Activated T-helper 1 cell treated with anti-CD3 and anti-CD28 coated beads, Interleukin-12 subunit alpha, Interleukin-12 subunit beta, Interleukin-2, Interleukin-4 antibody, amounts not matched to agents 30 ng/mL and 10 ng/mL and 1 ng/mL, durations not matched to agents 14 hours and 24 hours and 36 hours (primary cell): ENCODE measurements at regions of chr1 and their contacts with region 1.

Region 1: DNA sequence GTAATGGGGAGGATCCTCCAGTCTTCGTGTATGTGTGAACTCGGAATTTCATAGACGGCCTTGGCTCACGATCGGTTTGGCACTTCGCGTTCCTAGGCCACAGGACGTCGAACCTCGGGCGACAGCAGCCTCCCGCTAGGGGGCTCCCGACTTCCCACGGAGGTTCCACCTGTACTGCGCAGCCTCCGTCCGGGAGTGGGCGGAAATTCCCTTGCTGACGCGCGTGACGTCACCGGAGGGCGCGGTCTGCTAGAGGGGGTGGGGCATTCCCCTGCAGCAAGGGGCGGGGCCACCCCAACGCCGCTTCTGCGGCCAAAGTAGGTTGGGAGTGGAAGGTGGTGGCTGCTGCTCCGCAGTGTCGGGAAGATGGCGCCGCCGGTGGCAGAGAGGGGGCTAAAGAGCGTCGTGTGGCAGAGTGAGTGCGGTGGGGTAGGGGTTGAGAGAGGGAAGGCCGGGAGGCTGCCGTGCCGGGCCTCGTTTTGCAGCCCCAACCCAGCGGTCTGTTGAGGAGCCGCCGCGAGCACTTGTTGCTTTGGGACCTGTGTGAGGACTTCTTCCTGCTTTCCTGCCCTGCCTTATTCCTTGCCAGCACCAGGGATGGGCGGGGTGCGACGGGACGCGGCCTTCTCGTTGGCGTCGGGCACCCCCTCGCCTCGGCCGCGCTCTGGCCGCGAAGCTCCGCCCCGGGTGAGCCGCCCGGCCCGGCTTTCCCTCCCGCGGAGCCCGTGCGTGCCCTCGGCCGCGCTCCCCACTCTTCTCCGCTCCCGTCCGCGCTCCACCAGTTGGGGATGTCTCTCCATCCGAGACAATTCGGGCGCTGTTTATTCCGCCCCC is at the start of gene STXBP3:
- DNase-seq: peak; percentile 98
- H3K4me3 Mint-ChIP-seq: peak within 1 kb of the TSS; percentile 97
- H3K27ac Mint-ChIP-seq: peak within 1 kb of the TSS; percentile 100
- H3K4me1 Mint-ChIP-seq: peaks cover 35% of the 10 kb centered on the region
- H3K27me3 Mint-ChIP-seq: peaks cover 3% of the 10 kb centered on the region
- total RNA-seq, gene STXBP3: 39.6 and 42.4 TPM in 2 replicates

Region 2: DNA sequence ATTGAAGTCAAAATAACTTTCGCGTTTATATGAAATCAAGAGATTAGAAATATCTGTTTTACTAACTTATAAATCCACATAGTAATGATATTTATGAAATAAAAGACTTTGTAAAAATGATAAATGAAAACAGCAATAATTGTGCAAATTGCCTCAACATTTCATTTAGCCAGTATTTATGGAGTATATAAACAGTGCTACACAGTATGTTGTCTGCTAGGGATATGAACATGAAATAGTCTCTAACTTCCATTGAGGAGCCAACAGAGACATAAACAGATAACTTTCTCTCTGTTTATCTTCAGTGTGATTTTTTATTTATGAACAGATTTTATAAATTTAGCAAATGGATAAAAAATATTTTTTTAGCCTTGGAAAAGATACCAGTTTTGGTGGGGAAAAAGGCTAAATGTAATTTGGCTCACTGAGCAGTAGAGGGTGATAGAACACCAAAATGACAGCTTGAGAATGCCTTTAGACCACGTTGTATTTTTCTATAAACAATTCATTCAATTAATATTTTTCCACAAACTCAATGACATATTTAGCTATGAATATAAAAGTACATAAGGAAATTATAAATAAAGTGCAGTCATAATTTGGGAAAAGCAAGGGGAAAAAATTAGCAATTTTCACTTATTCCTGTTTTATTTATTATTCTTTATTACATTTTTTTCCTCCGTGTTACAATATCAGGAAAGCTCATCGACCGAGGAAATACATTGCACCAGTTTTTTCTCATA is 234.2 kb before region 1 on chr1:
- intact Hi-C with region 1: loop called (anchors 5 kb)
- DNase-seq: no peak
- H3K4me3 Mint-ChIP-seq: no peak overlapping the region
- H3K27ac Mint-ChIP-seq: no peak overlapping the region
- H3K4me1 Mint-ChIP-seq: no peaks in the 10 kb centered on the region
- H3K27me3 Mint-ChIP-seq: peaks cover 46% of the 10 kb centered on the region

Region 3: DNA sequence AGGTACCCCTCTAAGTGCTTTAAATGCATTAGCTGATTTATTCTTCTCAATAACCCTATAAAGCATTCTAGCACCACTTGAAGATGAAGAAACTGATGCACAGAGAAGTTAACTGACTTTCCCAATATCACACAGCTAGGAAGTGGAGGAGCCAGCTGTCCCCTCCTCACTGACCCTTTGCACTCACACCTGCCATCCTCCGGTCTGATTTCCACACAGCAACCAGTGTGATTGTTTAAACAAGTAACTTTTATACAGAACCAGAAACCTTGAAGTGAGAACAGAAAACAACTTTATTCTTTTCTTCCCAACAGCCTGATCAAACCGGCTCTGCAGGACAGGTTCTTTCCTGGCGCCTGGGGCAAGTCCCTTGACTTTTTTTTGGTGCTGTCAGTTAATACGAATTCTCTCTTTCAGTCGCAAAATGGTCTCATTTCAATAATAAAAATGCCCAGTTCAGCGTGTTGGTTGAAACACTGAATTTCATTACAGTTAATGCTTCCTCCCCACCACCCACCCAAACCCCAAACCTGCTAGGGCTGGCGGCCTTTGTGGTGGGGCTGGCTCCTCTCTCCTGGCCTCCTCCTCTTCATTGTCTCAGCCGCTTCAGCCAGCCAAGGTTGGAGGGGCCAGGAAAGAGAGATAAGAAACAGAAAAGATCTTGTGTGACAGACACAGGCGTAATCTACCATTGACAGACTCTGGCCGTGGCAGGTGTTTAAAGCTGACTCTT is 213.1 kb before region 1 on chr1:
- intact Hi-C with region 1: no loop called
- DNase-seq: no peak
- H3K4me3 Mint-ChIP-seq: no peak overlapping the region
- H3K27ac Mint-ChIP-seq: no peak overlapping the region
- H3K4me1 Mint-ChIP-seq: no peaks in the 10 kb centered on the region
- H3K27me3 Mint-ChIP-seq: peaks cover 12% of the 10 kb centered on the region

Region 4: GRCh38 chr1:108643492-108644335 is 102.9 kb before region 1 on chr1:
- intact Hi-C with region 1: loop called (anchors 2 kb)
- DNase-seq: peak; percentile 30
- H3K4me3 Mint-ChIP-seq: peak overlapping the region; percentile 31
- H3K27ac Mint-ChIP-seq: peak overlapping the region; percentile 68
- H3K4me1 Mint-ChIP-seq: peaks cover 71% of the 10 kb centered on the region
- H3K27me3 Mint-ChIP-seq: no peaks in the 10 kb centered on the region

Region 5: GRCh38 chr1:108708691-108709660 is 37.6 kb before region 1 on chr1:
- intact Hi-C with region 1: loop called (anchors 2 kb)
- DNase-seq: peak; percentile 40
- H3K4me3 Mint-ChIP-seq: no peak overlapping the region
- H3K27ac Mint-ChIP-seq: no peak overlapping the region
- H3K4me1 Mint-ChIP-seq: peaks cover 32% of the 10 kb centered on the region
- H3K27me3 Mint-ChIP-seq: peaks cover 11% of the 10 kb centered on the region

Region 6: GRCh38 chr1:108828022-108828961 is 81.7 kb after region 1 on chr1:
- intact Hi-C with region 1: no loop called
- DNase-seq: peak; percentile 45
- H3K4me3 Mint-ChIP-seq: no peak overlapping the region
- H3K27ac Mint-ChIP-seq: no peak overlapping the region
- H3K4me1 Mint-ChIP-seq: no peaks in the 10 kb centered on the region
- H3K27me3 Mint-ChIP-seq: peaks cover 6% of the 10 kb centered on the region

Region 7: DNA sequence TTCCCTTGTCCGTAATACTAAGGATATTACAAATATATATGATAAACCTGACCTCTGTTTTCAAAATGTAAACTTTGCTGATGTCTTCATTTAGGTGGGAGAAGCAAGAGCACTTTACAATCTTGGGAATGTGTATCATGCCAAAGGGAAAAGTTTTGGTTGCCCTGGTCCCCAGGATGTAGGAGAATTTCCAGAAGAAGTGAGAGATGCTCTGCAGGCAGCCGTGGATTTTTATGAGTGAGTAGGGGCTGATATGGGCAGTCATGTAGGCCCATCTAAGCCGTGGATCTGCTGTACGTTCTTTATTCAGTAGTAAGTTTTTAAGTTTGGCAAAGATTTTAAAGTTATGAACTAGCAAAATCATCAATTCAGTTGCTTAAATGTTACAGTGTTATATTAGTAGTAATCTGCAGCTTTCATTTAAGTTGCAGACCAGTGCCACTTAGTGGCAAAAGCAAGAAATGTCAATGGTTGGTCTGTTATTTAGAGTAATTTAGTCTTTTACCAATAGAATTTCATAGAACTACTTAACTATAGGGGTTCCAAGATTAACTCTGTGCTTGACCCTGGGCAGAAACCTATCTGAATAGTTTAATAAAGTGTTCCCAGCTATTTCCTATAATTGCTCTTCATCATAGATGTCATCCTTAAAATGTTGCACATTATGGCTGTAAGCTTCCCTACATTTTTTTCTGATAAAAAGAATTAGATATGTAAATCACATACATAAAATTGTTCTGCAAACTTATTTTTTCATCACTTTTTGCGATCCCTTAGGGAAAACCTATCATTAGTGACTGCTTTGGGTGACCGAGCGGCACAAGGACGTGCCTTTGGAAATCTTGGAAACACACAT is 151.5 kb after region 1 on chr1:
- intact Hi-C with region 1: loop called (anchors 2 kb)
- DNase-seq: peak; percentile 10
- H3K4me3 Mint-ChIP-seq: no peak overlapping the region
- H3K27ac Mint-ChIP-seq: no peak overlapping the region
- H3K4me1 Mint-ChIP-seq: no peaks in the 10 kb centered on the region
- H3K27me3 Mint-ChIP-seq: no peaks in the 10 kb centered on the region

Region 8: GRCh38 chr1:109075531-109076490 is 329.2 kb after region 1 on chr1 and contains the start of gene TAF13:
- intact Hi-C with region 1: loop called (anchors 2 kb)
- DNase-seq: peak; percentile 87
- H3K4me3 Mint-ChIP-seq: peak within 1 kb of the TSS; percentile 99
- H3K27ac Mint-ChIP-seq: peak within 1 kb of the TSS; percentile 88
- H3K4me1 Mint-ChIP-seq: peaks cover 20% of the 10 kb centered on the region
- H3K27me3 Mint-ChIP-seq: peaks cover 1% of the 10 kb centered on the region
- total RNA-seq, gene TAF13: 28.8 and 32.6 TPM in 2 replicates